MCF 10A (cell line): ENCODE measurements at regions of chr11 and their contacts with region 1.

Region 1: DNA sequence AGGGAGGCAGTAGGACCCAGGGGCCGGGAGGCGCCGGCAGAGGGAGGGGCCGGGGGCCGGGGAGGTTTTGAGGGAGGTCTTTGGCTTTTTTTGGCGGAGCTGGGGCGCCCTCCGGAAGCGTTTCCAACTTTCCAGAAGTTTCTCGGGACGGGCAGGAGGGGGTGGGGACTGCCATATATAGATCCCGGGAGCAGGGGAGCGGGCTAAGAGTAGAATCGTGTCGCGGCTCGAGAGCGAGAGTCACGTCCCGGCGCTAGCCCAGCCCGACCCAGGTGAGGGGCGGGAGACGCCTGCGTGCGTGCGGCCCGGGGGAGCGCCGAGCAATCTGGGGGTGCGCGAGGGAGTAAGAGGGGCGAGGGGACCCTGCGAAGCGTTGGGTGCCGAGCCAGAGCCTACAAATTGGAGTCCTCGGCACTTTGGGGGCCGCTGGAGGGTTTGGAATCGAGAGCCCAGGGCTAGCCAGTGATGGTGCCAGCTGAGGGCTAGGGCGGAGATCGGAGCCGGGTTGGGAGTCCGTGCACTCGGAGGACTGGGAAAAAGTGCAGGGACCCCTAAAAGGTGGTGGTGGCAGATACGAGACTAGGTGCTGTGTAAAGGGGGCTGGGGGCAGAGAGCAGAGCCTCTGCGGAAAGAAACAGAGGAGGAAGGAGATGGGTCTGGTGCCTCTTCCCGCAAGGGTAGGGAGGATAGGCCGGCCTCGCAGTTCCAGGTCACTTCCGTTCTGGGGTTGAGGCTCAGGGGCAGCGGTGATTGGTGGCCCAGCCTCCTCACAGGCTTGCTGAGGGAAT is at the start of gene SERPINH1:
- DNase-seq: peak; percentile 83
- H3K4me3 Mint-ChIP-seq: peak within 1 kb of the TSS; percentile 92
- H3K27ac Mint-ChIP-seq: peak within 1 kb of the TSS; percentile 94
- H3K4me1 Mint-ChIP-seq: peaks cover 41% of the 10 kb centered on the region
- H3K27me3 Mint-ChIP-seq: no peaks in the 10 kb centered on the region
- CTCF ChIP-seq: no peak
- total RNA-seq, gene SERPINH1: 80.5 TPM in 2 replicates

Region 2: DNA sequence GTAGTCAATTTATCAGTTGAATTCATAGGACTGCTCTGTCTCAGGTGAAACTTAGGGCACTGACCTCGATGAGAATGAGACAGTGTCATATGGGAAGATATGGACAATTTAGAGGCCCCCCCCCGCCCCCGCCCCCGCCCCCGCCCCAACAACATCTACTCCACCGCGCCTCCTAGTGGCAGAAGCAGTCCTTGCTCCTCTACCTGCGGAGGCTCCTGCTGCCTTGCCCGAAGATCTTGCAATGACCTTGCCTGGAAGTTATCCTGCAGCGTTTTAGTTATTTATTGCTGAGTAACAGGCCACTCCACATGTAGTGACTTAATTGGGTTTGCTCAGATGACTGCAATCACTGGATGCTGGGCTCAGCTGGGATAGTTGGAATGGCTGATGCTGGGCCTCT is 15.0 kb after region 1 on chr11:
- CTCF ChIA-PET with region 1: interaction called, 12 read pairs
- POLR2A ChIA-PET with region 1: interaction called, 28 read pairs
- intact Hi-C with region 1: no loop called
- DNase-seq: peak; percentile 30
- H3K4me3 Mint-ChIP-seq: no peak overlapping the region
- H3K27ac Mint-ChIP-seq: no peak overlapping the region
- H3K4me1 Mint-ChIP-seq: peaks cover 6% of the 10 kb centered on the region
- H3K27me3 Mint-ChIP-seq: peaks cover 12% of the 10 kb centered on the region
- CTCF ChIP-seq: peak; percentile 51